Panc1 (cell line): ENCODE measurements at regions of chr4 and their contacts with region 1.

Region 1: DNA sequence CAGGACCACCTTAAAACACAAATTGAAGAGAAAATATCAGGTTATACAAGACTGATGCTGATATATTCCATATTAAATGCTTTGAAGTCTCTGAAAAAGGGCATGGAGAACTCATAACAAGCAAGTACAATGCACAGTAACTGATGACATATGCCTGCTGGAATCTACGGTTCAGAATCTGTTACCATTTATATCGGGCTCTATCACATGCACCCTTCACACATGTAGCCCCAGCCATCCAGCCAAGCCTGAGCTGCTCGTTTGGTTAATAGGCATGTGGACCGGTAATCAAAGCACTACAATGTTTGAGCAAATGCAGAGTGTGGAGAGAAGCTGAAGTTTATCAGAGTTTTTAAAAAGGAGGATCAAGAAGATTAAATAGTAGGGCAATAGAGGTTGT is 11.8 kb downstream of the COMMD8 start:
- DNase-seq: no peak
- ATAC-seq: no peak
- H3K4me3 ChIP-seq: no peak overlapping the region
- H3K27ac ChIP-seq: no peak overlapping the region
- H3K4me1 ChIP-seq: no peaks in the 10 kb centered on the region
- H3K27me3 ChIP-seq: no peaks in the 10 kb centered on the region
- CTCF ChIP-seq: no peak

Region 2: DNA sequence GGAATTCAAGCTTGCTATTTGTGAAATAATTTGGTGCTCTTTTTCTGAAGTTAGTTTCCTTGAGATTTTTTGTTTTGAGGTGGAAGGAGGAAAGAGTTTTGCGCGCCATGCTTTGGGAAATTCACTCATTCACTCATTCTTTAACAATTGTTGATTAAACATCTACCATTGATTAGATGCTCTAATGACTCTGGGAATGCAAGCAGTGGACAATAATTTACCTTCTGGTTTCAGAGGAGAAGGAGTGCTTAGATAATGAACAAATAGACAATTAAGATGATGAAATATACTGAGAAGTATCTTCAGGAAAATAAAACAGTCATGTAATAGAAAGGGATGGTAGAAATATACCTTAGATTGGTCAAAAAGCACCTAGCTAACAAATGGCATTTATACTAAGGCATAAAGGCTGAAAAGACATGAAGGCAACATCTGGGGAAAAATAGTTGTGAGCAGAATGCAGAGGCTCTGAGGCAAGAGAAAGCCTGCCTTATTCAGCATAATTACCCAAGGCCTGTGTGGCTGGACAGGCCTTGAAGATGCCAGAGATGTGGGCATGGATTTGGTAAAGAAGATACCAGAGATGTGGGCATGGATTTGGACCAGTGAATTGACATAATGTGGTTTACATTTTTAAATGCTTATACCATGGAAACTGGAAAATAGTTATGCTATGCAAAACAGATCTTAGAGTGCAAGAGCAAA is 14.6 kb after region 1 on chr4:
- CTCF ChIA-PET with region 1: no interaction called
- POLR2A ChIA-PET with region 1: interaction called, 12 read pairs
- in situ Hi-C with region 1: no loop called
- intact Hi-C with region 1: no loop called
- DNase-seq: no peak
- ATAC-seq: no peak
- H3K4me3 ChIP-seq: no peak overlapping the region
- H3K27ac ChIP-seq: no peak overlapping the region
- H3K4me1 ChIP-seq: peaks cover 2% of the 10 kb centered on the region; the same call in 1 of the 2 replicates
- H3K27me3 ChIP-seq: no peaks in the 10 kb centered on the region
- CTCF ChIP-seq: no peak

Region 3: DNA sequence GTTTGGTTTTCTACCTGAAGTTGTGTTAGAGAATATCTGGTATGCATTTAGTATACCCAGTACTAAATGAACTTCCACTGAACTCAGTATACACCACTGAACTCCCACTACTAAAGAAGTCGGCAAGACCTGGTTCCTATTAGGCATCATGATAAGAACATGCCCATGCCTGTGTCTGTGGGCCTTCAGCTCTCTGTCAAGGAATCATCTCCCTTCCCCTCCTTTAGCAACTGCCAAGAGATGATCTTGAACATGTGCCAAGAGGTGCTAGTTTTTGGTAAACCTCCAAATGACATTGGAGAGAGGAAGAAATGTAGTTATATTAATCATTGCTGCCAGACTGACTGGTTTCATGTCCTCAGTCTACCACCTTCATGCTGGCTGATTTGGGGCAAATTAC is 146.7 kb after region 1 on chr4:
- CTCF ChIA-PET with region 1: no interaction called
- POLR2A ChIA-PET with region 1: no interaction called
- in situ Hi-C with region 1: no loop called
- intact Hi-C with region 1: no loop called
- DNase-seq: no peak
- ATAC-seq: no peak
- H3K4me3 ChIP-seq: no peak overlapping the region
- H3K27ac ChIP-seq: no peak overlapping the region
- H3K4me1 ChIP-seq: no peaks in the 10 kb centered on the region
- H3K27me3 ChIP-seq: no peaks in the 10 kb centered on the region
- CTCF ChIP-seq: no peak